GM10248 (cell line): ENCODE measurements at regions of chr2 and their contacts with region 1.

Region 1: DNA sequence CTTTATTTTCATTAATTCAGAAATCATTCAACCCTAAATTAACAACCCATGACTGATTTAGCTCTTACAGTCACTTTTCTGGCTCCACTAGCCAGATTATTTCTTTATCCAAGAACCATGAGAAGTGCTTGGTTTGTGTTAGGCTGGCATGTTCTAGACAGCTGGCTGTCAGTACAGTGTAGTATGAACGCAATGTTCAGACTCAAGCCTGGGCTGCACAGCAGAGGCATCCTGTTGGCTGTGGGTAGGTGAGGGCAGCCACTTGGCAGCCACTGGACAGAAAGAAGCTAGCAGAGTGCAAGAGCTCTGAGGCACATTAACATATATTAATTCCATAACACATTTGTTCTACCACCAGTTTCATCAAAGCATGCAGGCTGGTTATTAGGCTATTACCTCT is 522.9 kb upstream of the FSHR start:
- DNase-seq: no peak
- CTCF ChIP-seq: no peak

Region 2: DNA sequence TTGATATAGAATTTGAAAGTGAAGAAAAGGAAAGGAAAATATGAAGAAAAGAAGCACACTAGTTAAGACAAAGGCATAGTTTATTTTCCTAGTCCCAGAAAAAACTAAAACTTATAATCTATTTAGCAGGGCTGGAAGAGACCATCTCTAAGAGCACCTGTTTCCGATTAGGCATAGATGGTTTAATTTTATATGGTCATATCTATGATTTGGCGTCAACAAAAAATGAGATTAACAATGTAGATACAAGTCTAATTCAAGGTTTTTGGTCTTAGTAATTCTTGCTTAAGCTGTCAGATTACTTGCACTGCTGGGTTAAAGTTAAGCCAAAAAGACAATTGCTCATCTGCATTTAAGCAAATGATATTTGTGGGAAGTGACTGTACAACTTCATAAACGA is 20.4 kb before region 1 on chr2:
- CTCF ChIA-PET with region 1: no interaction called
- POLR2A ChIA-PET with region 1: no interaction called
- DNase-seq: no peak
- CTCF ChIP-seq: no peak

Region 3: GRCh38 chr2:49687918-49688317 is 10.7 kb after region 1 on chr2:
- CTCF ChIA-PET with region 1: interaction called, 10 read pairs
- POLR2A ChIA-PET with region 1: no interaction called
- DNase-seq: no peak
- CTCF ChIP-seq: peak; percentile 23